IMR-90 (cell line): ENCODE measurements at regions of chr5 and their contacts with region 1.

Region 1: DNA sequence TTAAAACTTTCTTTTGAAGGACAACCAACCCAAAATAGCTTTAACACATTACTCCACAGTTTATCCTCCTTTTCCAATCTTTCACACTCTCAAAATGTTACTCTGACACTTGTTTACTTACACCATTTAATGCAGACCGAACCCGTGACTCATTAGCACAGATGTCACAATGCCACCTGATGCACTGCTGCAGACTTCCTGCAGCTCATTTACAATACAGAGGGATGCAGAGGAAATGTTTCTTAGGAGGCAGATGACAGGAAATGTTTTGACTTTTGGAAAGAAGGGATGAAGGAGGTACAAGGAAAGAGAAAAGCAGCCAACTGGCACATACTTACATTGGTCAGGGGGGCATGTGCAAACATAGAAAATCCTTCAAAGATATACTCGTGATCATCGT is 39.0 kb downstream of the DROSHA start:
- DNase-seq: peak; percentile 53
- ATAC-seq: peak; percentile 70
- H3K4me3 ChIP-seq: no peak overlapping the region
- H3K27ac ChIP-seq: no peak overlapping the region
- H3K4me1 ChIP-seq: peaks cover 3% of the 10 kb centered on the region
- H3K27me3 ChIP-seq: no peaks in the 10 kb centered on the region
- CTCF ChIP-seq: no peak
- POLR2A ChIP-seq: no peak
- RAD21 ChIP-seq: no peak

Region 2: DNA sequence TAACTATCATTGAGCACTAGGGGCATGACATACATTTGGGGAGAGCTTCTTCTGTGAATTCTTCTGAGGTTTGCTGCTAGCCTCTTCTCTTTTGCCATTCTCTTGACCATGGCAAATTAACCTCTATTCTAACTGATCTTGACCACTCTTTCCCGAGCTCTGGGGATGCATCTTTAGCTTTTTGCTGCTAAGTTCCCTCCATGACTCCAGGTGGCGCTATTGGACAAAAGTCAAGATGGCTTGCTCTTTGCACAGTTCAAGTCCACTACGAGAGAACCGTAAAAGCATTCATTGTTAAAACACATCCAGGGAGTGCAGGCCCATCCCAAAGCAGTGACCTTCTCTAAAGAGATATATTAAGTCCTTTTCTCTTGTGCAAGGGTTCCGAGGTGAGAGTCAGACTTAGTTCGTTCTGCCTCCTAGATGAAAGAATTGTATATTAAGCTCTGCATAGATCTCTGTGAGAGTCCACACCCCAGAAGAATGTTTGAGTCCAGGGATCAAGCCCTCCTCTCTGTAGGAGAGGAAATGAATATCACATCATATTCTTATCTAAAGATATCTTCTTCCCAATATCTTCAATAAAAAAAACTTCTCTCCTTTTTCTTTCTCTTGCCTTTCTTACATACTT is 1452.3 kb before region 1 on chr5:
- CTCF ChIA-PET with region 1: no interaction called
- POLR2A ChIA-PET with region 1: no interaction called
- dilution Hi-C with region 1: no loop called
- in situ Hi-C with region 1: loop called (anchors 25 kb)
- intact Hi-C with region 1: no loop called
- DNase-seq: peak; percentile 31
- ATAC-seq: no peak
- H3K4me3 ChIP-seq: no peak overlapping the region
- H3K27ac ChIP-seq: no peak overlapping the region
- H3K4me1 ChIP-seq: no peaks in the 10 kb centered on the region
- H3K27me3 ChIP-seq: no peaks in the 10 kb centered on the region
- CTCF ChIP-seq: peak; percentile 59
- POLR2A ChIP-seq: no peak
- RAD21 ChIP-seq: peak; percentile 68

Region 3: DNA sequence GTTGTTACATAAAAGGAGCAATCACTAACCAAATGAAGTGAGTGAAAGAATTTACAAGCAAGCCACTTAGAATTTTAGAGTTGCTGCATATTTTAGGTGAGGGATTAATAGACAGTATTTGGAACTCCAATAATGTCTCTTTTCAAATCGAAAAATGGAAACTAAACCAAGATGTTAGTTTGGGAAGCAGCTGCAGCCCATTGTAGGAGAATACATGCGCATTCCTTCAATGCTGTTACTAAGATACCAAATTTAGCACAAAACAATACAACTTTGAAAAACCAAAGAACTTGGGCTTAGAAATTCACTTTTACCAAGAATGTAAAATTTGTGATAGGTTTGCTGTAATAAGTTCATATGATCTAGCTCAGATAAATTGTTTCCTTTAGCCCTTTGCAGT is 711.2 kb before region 1 on chr5:
- CTCF ChIA-PET with region 1: no interaction called
- POLR2A ChIA-PET with region 1: no interaction called
- dilution Hi-C with region 1: no loop called
- in situ Hi-C with region 1: loop called (anchors 25 kb)
- intact Hi-C with region 1: no loop called
- DNase-seq: no peak
- ATAC-seq: no peak
- H3K4me3 ChIP-seq: no peak overlapping the region
- H3K27ac ChIP-seq: no peak overlapping the region
- H3K4me1 ChIP-seq: no peaks in the 10 kb centered on the region
- H3K27me3 ChIP-seq: no peaks in the 10 kb centered on the region
- CTCF ChIP-seq: no peak
- POLR2A ChIP-seq: no peak
- RAD21 ChIP-seq: no peak

Region 4: DNA sequence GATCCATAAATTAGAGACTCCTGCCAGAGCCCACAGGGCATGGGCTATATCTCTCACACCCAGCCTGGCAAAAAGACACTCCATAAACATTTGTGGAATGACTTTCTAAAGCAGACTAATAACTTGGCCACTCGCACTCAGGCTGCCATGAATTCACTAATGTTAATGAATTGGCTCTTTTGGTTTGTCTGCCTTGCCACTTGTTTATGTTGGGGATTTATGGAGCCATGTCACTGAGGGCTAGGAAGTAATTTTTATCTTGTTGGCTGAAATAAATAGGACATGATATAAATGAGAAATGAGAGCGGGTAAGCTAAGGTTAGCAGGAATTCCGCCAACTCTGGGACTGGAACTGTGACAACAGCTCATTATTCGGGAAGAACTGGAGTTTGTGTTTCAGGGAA is 16.1 kb before region 1 on chr5:
- CTCF ChIA-PET with region 1: no interaction called
- POLR2A ChIA-PET with region 1: no interaction called
- dilution Hi-C with region 1: no loop called
- in situ Hi-C with region 1: no loop called
- intact Hi-C with region 1: no loop called
- DNase-seq: no peak
- ATAC-seq: no peak
- H3K4me3 ChIP-seq: no peak overlapping the region
- H3K27ac ChIP-seq: peak overlapping the region; percentile 56; the same call in 1 of the 2 replicates
- H3K4me1 ChIP-seq: peaks cover 15% of the 10 kb centered on the region
- H3K27me3 ChIP-seq: no peaks in the 10 kb centered on the region
- CTCF ChIP-seq: no peak
- POLR2A ChIP-seq: no peak
- RAD21 ChIP-seq: no peak